Mammary epithelial cell (primary cell): ENCODE measurements at regions of chr16 and their contacts with region 1.

Region 1: DNA sequence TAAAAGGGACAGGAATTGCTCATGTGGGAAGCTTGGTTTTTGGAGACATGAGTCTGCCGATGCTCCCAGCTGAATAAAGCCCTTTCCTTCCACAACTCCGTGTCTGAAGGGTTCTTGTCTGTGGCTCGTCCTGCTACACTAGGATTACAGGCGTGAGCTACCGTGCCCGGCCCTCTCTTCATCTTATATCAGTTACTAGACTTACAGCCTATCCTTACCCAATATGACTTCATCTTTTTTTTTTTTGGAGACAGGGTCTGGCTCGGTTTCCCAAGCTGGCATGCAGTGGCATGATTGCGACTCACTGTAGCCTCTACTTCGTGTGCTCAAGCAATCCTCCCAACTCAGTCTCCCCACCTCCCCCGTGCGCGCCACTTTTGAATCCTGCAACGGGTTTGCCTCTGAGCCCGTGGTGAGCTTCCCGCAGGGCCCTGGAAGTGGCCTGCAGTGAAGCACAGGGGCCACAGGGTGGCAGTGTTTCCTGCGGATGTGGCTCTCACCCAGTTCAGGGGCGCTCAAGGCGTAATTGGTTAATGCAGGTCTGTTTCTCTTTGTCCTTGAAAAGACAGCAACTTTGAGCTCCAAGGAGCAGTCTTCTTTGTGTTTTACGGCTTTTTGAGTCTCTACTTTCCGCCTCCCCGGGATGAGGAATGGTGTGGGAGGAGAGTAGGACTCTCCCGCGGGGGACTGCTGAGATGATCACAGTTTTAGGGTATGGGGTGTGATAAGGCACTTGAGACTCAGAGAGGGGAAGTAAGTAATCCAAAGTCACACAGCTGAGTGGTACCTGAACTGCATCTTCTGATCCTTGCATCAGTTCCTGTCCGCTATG is 22.7 kb upstream of the GPRC5B start:
- DNase-seq: peak; percentile 52
- H3K4me3 ChIP-seq: no peak overlapping the region
- H3K27ac ChIP-seq: no peak overlapping the region
- H3K4me1 ChIP-seq: no peaks in the 10 kb centered on the region
- H3K27me3 ChIP-seq: no peaks in the 10 kb centered on the region
- CTCF ChIP-seq: peak; percentile 92 to 97

Region 2: DNA sequence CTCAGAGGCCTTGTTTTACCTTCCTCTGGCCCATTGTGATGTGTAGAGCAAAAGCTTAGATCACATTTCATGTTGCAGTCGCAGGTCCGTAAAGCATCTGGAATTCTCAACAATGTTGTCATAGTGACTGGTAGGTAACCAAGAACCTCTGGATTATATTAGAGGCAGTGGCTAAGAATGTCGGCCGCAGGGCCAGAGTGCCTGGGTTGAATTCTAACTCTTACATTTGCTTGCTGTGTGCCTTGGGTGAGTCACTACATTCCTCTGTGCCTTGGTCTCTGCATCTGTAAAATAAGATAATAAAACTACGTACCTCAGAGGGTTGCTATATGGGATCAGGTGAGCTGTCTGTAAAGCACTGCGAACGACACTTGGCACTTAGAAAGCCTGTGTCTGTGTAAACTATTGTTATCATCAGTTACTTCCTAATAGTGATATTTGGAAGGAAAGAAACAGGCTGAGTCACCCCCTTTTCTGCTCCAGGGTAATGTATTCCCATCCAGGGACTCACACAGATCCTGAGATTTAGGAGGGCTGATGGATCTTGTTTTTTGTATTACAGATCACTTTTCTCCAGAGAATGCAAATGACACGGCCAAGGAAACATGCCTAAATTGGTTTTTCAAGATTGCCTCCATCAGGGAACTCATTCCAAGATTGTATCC is 299.6 kb before region 1 on chr16:
- CTCF ChIA-PET with region 1: no interaction called
- dilution Hi-C with region 1: no loop called
- in situ Hi-C with region 1: no loop called
- intact Hi-C with region 1: no loop called
- DNase-seq: no peak
- H3K4me3 ChIP-seq: no peak overlapping the region
- H3K27ac ChIP-seq: no peak overlapping the region
- H3K4me1 ChIP-seq: no peaks in the 10 kb centered on the region
- H3K27me3 ChIP-seq: no peaks in the 10 kb centered on the region
- CTCF ChIP-seq: no peak

Region 3: DNA sequence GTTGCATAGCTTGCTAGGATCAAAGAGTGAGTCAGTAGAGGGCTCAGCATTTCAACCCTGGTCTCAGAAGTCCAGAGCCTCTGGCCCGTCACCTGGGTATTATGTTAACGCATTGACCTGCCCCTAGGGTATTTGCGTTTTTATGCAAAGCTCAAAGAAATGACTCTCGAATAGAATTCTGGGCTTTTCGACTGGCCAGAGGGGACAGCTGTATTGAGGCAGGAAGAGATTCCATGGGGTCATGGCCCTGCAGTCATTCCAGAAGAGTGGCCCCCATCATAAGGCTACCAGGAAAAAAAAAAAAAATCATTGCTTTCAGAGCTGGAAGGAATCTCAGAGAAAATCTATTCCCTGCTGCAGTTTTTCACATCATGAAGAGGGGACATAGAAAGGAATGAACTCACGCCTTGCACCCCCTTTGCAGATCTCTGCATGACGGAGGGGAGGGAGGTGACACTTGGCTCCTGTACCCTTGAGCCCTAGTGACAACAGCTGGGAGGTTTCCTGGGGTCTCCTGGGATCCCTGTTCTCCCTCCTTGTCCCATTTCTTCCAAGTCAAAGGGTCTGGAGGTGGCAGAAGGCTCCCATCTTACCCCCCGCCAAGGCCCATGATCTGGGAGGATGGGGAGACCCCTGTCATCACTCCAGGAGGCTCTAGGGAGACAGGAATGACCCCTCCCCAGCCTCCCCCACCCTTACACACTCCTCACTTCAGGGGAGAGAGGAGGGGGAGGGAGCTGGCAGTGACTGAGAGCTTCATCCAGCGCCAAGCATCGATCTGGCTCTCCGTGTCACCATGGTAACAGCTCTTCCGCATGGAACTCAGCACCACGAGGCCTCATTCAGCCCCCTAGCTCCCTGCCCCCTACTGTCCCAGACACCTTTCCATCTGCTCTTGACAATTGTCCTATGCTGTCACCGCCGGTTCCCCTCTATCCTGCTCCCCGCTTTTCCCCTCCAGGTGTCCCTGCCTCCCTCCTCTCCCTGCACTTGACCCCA is 384.1 kb after region 1 on chr16:
- CTCF ChIA-PET with region 1: no interaction called
- dilution Hi-C with region 1: loop called (anchors 25 kb)
- in situ Hi-C with region 1: loop called in 1 of 2 experiments (anchors 25 kb)
- intact Hi-C with region 1: no loop called
- DNase-seq: no peak
- H3K4me3 ChIP-seq: no peak overlapping the region
- H3K27ac ChIP-seq: no peak overlapping the region
- H3K4me1 ChIP-seq: no peaks in the 10 kb centered on the region
- H3K27me3 ChIP-seq: no peaks in the 10 kb centered on the region
- CTCF ChIP-seq: no peak

Region 4: DNA sequence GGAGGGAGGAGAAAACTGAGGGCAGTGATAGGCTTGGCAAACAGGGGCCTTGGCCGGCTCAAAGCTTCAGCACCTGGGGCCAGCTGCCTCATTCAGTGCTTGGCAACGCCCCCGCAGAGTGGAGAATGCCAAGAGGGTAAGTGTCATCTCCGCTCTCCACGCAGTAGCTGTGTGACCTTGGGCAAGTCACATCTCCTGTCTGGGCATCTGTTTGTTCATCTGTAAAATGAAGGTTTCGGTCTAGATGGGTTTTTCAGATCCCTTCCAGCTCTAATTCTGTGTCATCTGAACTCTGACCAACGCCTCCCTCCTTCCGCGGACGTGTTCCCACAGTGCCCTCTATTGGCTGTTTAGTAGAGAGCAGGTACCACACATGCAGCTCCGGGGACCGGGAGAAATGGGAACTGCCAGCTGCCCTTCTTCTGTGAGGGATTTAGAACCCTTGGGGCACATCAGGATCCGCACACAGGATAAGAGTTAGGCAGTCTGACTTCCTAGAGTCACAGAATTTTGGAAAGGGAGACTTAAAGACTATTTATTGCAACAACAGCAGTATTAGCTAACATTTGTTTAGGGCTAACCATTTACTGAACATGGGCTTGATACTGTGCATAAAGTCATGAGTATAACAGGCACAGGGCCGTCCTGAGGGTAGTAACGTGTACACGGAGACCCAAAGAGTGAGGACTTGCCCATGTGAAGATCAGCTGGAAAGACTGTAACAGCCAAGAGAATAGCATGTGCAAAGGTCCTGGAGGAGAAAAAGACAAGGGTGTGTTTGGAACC is 393.1 kb after region 1 on chr16:
- CTCF ChIA-PET with region 1: interaction called, 18 read pairs
- dilution Hi-C with region 1: loop called (anchors 25 kb)
- in situ Hi-C with region 1: loop called (anchors 5 to 25 kb)
- intact Hi-C with region 1: loop called (anchors 1 kb)
- DNase-seq: peak; percentile 42
- H3K4me3 ChIP-seq: no peak overlapping the region
- H3K27ac ChIP-seq: no peak overlapping the region
- H3K4me1 ChIP-seq: no peaks in the 10 kb centered on the region
- H3K27me3 ChIP-seq: no peaks in the 10 kb centered on the region
- CTCF ChIP-seq: peak; percentile 70 to 86

Region 5: GRCh38 chr16:20707461-20707860 is 800.1 kb after region 1 on chr16:
- CTCF ChIA-PET with region 1: no interaction called
- dilution Hi-C with region 1: no loop called
- in situ Hi-C with region 1: loop called (anchors 25 kb)
- intact Hi-C with region 1: loop called (anchors 5 kb)
- DNase-seq: no peak
- H3K4me3 ChIP-seq: no peak overlapping the region
- H3K27ac ChIP-seq: no peak overlapping the region
- H3K4me1 ChIP-seq: no peaks in the 10 kb centered on the region
- H3K27me3 ChIP-seq: no peaks in the 10 kb centered on the region
- CTCF ChIP-seq: no peak